ENCODE measurements at regions of chr5 and their contacts with region 1.

Region 1: GRCh38 chr5:141960449-141961202 is 2.6 kb upstream of the PCDH12 start:
- DNase-seq: peak; percentile 95
- H3K4me3 Mint-ChIP-seq: peak overlapping the region; percentile 24
- H3K27ac Mint-ChIP-seq: peak overlapping the region; percentile 90
- H3K4me1 Mint-ChIP-seq: peaks cover 53% of the 10 kb centered on the region
- H3K27me3 Mint-ChIP-seq: peaks cover 8% of the 10 kb centered on the region

Region 2: GRCh38 chr5:141664732-141665461 is 295.7 kb before region 1 on chr5:
- CTCF ChIA-PET with region 1: interaction called, 18 read pairs
- DNase-seq: peak; percentile 84
- H3K4me3 Mint-ChIP-seq: no peak overlapping the region
- H3K27ac Mint-ChIP-seq: no peak overlapping the region
- H3K4me1 Mint-ChIP-seq: peaks cover 5% of the 10 kb centered on the region
- H3K27me3 Mint-ChIP-seq: peaks cover 19% of the 10 kb centered on the region

Region 3: DNA sequence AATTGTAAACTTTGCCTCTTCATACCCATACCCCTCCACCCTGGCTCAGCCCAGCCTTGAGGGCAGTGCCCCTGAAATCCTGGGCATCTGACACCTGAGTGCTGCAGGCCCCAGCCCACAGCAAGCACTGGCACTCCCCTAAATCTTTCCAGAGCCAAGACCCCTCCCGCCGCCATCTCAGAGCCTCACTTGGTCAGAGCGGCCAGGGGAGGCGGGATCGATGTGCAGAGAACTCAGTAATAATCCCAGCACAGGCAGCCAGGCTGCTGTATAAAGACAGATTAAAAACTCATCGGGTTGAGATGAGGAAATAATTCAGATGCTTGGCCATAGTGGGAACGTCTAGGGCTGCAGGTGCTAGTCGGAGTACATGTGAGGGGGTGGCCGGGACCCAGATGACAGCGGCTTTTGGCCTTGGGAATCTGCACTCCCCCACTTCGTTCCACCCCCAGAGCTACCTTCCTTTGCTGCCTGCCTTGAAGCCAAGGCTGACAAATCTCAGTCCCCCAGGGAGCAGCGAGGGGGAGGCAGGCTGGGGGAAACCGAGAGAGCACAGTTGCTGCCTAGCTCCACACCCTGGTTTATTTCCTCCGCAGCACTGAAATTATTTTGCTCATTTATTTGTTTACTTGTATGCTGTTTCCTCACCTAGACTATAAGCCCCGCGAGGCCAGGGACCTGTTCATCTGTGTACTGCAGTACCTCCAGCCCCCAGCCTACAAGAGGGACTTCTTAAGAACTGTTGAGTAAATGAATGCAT is 259.1 kb before region 1 on chr5:
- CTCF ChIA-PET with region 1: interaction called, 155 read pairs
- DNase-seq: no peak
- H3K4me3 Mint-ChIP-seq: peak overlapping the region; percentile 70
- H3K27ac Mint-ChIP-seq: no peak overlapping the region
- H3K4me1 Mint-ChIP-seq: peaks cover 22% of the 10 kb centered on the region
- H3K27me3 Mint-ChIP-seq: peaks cover 40% of the 10 kb centered on the region

Region 4: GRCh38 chr5:141804475-141804874 is 156.2 kb before region 1 on chr5:
- CTCF ChIA-PET with region 1: no interaction called
- DNase-seq: no peak
- H3K4me3 Mint-ChIP-seq: no peak overlapping the region
- H3K27ac Mint-ChIP-seq: no peak overlapping the region
- H3K4me1 Mint-ChIP-seq: no peaks in the 10 kb centered on the region
- H3K27me3 Mint-ChIP-seq: peaks cover 65% of the 10 kb centered on the region

Region 5: DNA sequence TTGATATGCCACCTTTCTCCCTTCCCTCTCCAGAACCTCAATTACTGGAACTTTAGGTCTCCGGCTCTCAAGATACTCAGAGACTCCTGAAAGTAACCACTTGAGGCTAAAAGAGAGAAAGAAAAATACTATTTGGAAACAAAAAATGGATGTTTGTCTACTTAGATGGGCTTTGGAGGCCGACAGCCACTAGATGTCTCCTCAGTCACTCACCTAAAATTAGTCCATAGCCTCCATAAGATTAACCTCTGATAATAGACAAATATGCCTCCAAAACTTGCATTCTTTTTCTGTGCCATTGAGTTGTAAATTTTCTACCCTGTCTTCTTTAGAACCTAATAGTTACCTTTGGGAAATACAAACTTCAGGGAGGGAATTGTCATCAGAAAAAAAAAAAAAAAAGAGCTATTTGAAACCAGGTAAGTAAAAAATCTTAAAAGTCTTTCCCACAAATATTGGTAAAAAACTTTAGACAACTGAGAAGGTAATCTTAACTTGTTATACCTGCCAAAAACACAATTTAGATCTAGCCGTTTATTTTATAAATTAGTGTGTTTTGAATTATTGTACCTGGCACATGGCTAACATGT is 71.2 kb before region 1 on chr5:
- CTCF ChIA-PET with region 1: interaction called, 61 read pairs
- DNase-seq: no peak
- H3K4me3 Mint-ChIP-seq: no peak overlapping the region
- H3K27ac Mint-ChIP-seq: no peak overlapping the region
- H3K4me1 Mint-ChIP-seq: peaks cover 2% of the 10 kb centered on the region
- H3K27me3 Mint-ChIP-seq: peaks cover 41% of the 10 kb centered on the region

Region 6: DNA sequence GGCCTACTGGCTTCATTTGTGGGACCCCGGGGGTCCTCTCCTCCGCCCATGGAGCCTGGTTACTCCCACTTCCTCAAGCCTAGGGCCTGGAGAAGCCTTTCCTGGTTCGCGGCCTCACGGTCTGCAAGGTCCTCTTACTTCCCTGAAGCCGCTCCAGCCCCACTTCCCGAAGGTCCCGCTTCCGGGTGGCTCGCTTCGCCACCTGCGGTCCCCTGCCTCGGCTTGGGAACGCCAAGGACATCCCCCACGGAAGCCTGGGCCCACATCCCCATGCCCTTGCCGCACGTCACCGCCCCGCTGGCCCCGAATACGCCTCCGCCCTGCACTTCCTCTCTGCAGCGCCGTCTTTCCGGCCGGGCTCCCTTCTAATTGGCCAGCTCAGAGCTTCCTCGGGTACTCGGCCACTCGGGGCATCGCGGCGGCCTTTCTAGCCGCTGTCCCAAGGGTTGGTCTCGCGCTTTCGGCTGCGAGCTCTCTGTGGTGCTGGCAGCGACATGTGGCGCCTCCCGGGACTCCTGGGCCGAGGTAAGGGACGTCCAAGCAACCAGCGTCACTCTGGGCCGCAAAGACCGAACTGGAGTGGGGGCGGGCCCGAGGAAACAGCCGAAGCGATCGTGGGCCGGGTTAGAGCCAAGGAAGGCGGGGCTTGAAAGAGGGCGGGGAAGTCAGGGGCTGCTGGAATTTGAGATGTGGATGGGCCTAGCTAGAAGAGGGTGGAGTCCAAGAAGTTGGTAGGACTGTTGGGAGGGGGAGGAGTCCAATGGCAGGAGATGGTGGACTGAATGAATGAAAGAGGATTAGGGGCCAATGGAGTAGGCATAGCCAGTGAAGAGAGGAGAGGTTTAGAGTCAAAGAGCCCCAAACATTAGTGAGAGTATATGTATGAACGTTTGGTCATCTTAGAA is 36.9 kb before region 1 on chr5 and contains the start of gene DELE1:
- CTCF ChIA-PET with region 1: interaction called, 15 read pairs
- DNase-seq: peak; percentile 96
- H3K4me3 Mint-ChIP-seq: peak within 1 kb of the TSS; percentile 89
- H3K27ac Mint-ChIP-seq: peak within 1 kb of the TSS; percentile 90
- H3K4me1 Mint-ChIP-seq: peaks cover 44% of the 10 kb centered on the region
- H3K27me3 Mint-ChIP-seq: no peaks in the 10 kb centered on the region

Region 7: DNA sequence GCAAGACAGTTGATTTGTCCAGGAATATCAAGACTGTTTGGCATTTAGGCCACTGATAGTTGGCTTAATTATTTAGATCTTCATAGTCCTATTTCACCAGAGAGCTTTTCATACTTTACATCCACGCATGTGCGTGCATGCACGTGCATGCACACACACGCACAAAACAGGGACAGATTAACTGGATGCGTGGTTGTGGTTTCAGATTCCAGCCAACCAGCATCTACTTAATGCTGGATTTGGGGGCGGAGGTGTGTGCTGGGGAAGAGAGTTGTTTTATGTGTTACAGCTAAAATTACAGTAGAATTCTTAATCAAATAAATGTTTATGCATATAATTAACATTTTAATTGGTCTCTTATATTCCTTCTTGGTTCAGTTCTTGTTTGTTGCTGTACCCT is 15.6 kb after region 1 on chr5:
- CTCF ChIA-PET with region 1: interaction called, 10 read pairs
- DNase-seq: no peak
- H3K4me3 Mint-ChIP-seq: no peak overlapping the region
- H3K27ac Mint-ChIP-seq: no peak overlapping the region
- H3K4me1 Mint-ChIP-seq: peaks cover 17% of the 10 kb centered on the region
- H3K27me3 Mint-ChIP-seq: no peaks in the 10 kb centered on the region

Region 8: DNA sequence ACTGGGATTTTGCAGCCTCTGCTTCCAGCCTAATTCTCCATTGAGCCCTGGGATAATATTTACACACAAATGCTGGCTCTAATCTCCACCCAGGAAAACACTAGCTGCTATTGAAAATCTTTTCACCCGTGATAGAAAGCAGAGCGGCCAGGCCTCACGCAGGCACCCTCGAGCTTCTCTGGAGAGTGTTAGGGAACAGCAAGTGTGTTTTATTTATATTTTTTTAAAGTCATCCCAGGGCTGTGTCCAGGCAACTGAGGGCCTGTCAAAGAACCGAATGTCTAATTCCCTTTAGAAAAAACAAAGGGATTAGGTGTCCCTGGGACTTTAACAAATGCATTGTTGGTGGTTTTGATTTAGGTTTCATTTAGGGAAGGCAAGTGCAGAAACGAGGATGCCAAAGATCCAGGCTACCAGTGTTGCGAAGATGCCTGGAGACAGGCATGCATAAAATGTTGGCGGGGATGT is 415.4 kb after region 1 on chr5:
- CTCF ChIA-PET with region 1: no interaction called
- DNase-seq: no peak
- H3K4me3 Mint-ChIP-seq: no peak overlapping the region
- H3K27ac Mint-ChIP-seq: no peak overlapping the region
- H3K4me1 Mint-ChIP-seq: peaks cover 7% of the 10 kb centered on the region
- H3K27me3 Mint-ChIP-seq: peaks cover 10% of the 10 kb centered on the region

Region 9: GRCh38 chr5:142486581-142486980 is 526.0 kb after region 1 on chr5:
- CTCF ChIA-PET with region 1: no interaction called
- DNase-seq: no peak
- H3K4me3 Mint-ChIP-seq: no peak overlapping the region
- H3K27ac Mint-ChIP-seq: no peak overlapping the region
- H3K4me1 Mint-ChIP-seq: no peaks in the 10 kb centered on the region
- H3K27me3 Mint-ChIP-seq: peaks cover 29% of the 10 kb centered on the region